ENCODE measurements at regions of chr17 and their contacts with region 1.

Region 1: DNA sequence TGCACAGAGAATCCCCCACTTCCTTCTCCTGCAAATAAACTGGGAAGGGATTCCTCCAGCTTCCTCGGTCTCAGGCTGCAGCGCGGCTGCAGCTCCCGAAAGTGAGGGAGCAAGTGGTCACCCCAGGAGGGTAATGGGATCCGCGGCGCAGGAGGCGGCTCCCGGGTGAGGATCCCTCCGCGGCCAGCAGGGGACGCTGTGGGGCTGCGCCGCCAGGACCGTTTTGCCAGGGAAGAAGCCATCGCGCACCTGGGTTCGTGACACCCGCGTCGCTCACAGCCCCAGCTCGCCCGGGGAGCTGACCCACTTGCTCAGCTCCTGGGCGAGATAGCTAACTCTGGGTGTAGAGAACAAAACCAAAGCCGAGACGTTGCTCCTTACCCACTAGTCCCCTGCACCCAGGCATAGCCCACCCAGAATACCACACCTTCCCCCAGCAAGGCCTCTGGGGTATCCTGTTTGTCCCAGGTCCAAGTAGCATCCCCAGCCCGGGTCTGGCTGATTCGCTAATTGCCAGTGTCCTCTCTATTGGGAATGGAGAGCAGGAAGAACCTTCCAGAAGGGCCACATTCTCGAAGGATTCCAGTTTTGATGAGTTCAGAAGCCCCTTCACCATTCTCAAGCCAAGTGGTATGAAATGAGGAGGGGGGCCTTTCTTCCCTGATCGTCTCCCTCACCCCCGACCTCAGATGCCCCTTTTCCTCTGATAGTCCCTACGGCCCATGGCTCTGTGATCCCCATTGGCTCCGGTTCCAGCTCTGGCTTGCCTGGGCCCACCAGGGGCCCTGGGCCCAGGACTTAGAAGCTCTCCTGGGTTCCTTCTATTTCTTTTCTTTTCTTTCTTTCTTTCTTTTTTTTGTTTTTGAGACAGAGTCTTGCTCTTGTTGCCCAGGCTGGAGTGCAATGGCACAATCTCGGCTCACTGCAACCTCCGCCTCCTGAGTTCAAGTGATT is 14.1 kb downstream of the CYGB start:
- DNase-seq: peak; percentile 89
- CTCF ChIP-seq: peak; percentile 95

Region 2: GRCh38 chr17:76540381-76541300 is 17.3 kb after region 1 on chr17:
- CTCF ChIA-PET with region 1: interaction called, 53 read pairs
- POLR2A ChIA-PET with region 1: no interaction called
- DNase-seq: peak; percentile 62
- CTCF ChIP-seq: no peak

Region 3: DNA sequence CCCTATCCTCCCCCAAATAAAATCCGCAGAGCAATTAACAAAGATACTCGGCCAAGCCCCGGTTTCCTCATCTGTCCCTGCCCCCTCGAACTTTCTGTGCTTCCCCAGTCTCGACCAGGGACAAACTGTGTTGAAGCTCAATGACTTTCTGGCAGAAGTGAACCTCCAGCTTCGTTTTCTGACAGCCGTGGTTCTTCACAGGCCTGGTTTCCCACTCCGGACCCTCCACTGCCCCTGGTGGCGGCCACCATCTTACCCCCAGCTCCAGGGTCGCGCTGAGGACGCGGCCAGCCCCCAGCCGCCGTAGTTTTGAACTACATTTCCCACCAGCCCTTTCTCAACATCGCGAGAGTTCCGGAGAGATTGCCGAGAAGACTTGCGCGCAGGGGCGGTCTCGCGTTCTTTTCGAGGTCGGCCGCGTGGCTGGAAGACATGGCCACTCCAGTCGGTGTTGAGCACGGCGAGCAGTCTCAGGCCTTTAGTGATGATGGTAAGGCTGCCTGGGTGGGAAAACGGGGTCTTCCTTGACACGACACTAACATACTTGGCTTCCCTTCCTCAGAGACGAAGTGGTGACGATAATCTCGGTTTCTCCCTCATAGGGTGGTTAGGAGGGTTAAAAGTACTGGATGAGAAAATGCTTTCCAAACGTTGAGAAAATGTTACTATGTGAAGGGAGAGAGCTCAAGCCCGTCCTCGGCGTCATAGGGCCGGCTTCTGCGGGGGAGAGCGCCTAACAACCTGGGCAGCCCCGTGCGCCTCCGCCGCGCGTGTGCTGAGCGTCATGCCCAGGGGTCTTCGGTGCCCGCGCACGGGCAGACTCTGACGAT is 34.2 kb after region 1 on chr17:
- CTCF ChIA-PET with region 1: interaction called, 26 read pairs
- POLR2A ChIA-PET with region 1: no interaction called
- DNase-seq: peak; percentile 92
- CTCF ChIP-seq: peak; percentile 20

Region 4: GRCh38 chr17:76681222-76682137 is 158.1 kb after region 1 on chr17:
- CTCF ChIA-PET with region 1: interaction called, 18 read pairs
- POLR2A ChIA-PET with region 1: no interaction called
- DNase-seq: peak; percentile 80
- CTCF ChIP-seq: peak; percentile 86

Measured in GM10248 (cell line).